ENCODE measurements at regions of chr4 and their contacts with region 1.

Region 1: DNA sequence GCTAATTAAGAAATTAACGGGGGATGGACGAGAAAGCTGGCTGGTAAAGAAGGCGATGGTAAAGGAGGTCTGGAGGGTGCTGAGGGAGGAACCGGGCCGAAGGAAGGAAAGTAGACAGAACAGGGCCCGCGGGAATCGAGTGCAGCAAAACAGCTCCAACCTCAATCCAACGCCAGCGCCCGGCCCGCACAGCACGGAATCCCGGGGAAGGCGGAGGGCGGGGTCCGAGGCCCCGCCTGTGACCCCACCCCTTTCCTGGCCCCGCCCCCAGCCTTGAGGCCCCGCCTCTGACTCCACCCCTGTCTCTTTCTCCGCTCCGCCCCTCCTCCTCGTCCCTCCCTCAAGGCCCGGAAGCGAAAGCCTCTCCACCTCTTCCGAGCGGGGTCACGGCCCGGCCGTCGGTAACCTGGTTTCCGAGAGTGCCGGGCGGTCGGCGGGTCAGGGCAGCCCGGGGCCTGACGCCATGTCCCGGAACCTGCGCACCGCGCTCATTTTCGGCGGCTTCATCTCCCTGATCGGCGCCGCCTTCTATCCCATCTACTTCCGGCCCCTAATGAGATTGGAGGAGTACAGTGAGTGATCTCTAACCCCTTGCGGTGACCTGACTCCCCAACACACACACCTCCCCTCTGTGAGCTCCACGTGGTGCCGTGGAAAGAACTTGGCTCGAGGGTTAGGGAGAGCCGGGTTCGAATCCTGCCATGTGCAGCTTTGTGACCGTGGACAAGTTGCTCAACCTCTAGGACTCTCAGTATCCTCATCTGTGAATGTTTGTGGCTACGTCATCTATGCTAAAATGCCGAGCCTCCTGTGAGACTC is at the start of gene SMIM20:
- DNase-seq: peak; percentile 93
- H3K4me3 ChIP-seq: peak within 1 kb of the TSS; percentile 74
- H3K27ac ChIP-seq: peak within 1 kb of the TSS; percentile 78
- H3K4me1 ChIP-seq: peaks cover 26% of the 10 kb centered on the region
- CTCF ChIP-seq: no peak
- total RNA-seq, gene SMIM20: 33.4 and 44.0 TPM in 2 replicates

Region 2: GRCh38 chr4:25870081-25870480 is 44.0 kb before region 1 on chr4:
- CTCF ChIA-PET with region 1: no interaction called
- POLR2A ChIA-PET with region 1: interaction called, 43 read pairs
- intact Hi-C with region 1: loop called (anchors 1 kb)
- DNase-seq: peak; percentile 83
- H3K4me3 ChIP-seq: peak overlapping the region; percentile 75
- H3K27ac ChIP-seq: peak overlapping the region; percentile 99
- H3K4me1 ChIP-seq: peaks cover 100% of the 10 kb centered on the region
- CTCF ChIP-seq: no peak

Region 3: GRCh38 chr4:25875281-25875745 is 38.7 kb before region 1 on chr4:
- CTCF ChIA-PET with region 1: no interaction called
- POLR2A ChIA-PET with region 1: interaction called, 43 read pairs
- intact Hi-C with region 1: loop called (anchors 1 kb)
- DNase-seq: peak; percentile 96
- H3K4me3 ChIP-seq: peak overlapping the region; percentile 49
- H3K27ac ChIP-seq: peak overlapping the region; percentile 99
- H3K4me1 ChIP-seq: peaks cover 100% of the 10 kb centered on the region
- CTCF ChIP-seq: no peak

Region 4: DNA sequence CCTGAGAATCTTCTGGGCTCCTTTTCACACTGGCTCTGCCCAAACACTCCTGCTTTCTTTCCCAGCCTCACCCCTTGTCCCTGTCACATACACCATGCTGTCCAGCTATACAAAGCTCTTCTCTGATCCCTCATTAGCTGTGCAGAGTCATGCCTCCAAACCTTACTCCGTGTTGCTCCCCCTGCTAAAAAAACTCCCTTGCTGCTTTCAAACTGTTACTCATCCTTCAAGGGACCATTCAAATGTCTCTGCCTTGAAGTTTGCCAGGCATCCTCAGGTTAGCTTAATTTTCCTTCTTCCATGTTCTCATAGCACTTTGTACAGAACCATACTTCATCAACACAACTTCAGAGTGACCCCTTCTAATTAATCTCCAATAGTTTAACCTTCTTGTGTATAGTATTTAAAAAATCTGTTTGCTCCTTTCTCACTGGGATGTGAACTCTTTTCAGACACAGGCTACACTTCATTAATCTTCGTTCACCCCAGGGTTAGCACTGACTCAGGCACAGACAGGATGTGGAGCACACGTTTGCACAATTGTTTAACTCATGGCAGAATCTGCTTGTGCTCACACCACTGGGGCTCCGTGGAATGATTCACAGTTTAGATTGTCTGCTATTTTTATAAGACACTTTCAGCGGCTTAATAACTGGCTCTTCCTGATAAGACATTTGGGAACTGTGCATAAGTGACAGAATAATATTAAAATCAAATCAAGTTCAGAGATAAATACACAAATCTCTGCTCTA is 29.9 kb before region 1 on chr4:
- CTCF ChIA-PET with region 1: no interaction called
- POLR2A ChIA-PET with region 1: interaction called, 20 read pairs
- intact Hi-C with region 1: no loop called
- DNase-seq: peak; percentile 60
- H3K4me3 ChIP-seq: no peak overlapping the region
- H3K27ac ChIP-seq: no peak overlapping the region
- H3K4me1 ChIP-seq: peaks cover 53% of the 10 kb centered on the region
- CTCF ChIP-seq: no peak

Region 5: GRCh38 chr4:26093551-26093950 is 179.5 kb after region 1 on chr4:
- CTCF ChIA-PET with region 1: no interaction called
- POLR2A ChIA-PET with region 1: no interaction called
- intact Hi-C with region 1: no loop called
- DNase-seq: no peak
- H3K4me3 ChIP-seq: no peak overlapping the region
- H3K27ac ChIP-seq: no peak overlapping the region
- H3K4me1 ChIP-seq: no peaks in the 10 kb centered on the region
- CTCF ChIP-seq: no peak